Endothelial cell of umbilical vein (primary cell): ENCODE measurements at regions of chr11 and their contacts with region 1.

Region 1: GRCh38 chr11:93895106-93895862 is 44.9 kb upstream of the VSTM5 start:
- DNase-seq: peak; percentile 40
- H3K4me3 ChIP-seq: no peak overlapping the region
- H3K27ac ChIP-seq: no peak overlapping the region
- H3K4me1 ChIP-seq: no peaks in the 10 kb centered on the region
- H3K27me3 ChIP-seq: no peaks in the 10 kb centered on the region
- CTCF ChIP-seq: peak; percentile 20 to 32
- POLR2A ChIP-seq: no peak

Region 2: GRCh38 chr11:93591247-93591898 is 303.9 kb before region 1 on chr11:
- CTCF ChIA-PET with region 1: no interaction called
- POLR2A ChIA-PET with region 1: no interaction called
- dilution Hi-C with region 1: no loop called
- intact Hi-C with region 1: no loop called
- DNase-seq: no peak
- H3K4me3 ChIP-seq: no peak overlapping the region
- H3K27ac ChIP-seq: no peak overlapping the region
- H3K4me1 ChIP-seq: no peaks in the 10 kb centered on the region
- H3K27me3 ChIP-seq: no peaks in the 10 kb centered on the region
- CTCF ChIP-seq: no peak
- POLR2A ChIP-seq: no peak

Region 3: DNA sequence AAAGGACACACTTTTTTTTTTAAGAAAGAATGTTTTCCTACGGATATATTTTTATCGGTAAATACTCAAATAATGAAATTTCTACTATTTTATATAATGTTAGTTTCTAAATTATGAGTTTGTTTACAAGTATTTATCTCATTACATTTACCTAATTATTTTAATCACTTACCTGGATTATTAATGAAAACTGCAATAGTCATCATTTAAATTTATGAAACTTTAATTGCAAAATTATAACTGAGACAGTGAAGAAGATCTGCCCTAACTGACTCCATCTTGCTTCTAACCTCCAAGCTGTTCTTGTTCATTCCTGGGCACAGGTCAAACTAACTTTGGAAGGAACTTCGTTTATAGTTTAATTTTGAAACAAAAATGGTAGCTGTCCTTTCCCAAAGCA is 19.6 kb before region 1 on chr11:
- CTCF ChIA-PET with region 1: interaction called, 12 read pairs
- POLR2A ChIA-PET with region 1: no interaction called
- dilution Hi-C with region 1: no loop called
- intact Hi-C with region 1: no loop called
- DNase-seq: no peak
- H3K4me3 ChIP-seq: no peak overlapping the region
- H3K27ac ChIP-seq: no peak overlapping the region
- H3K4me1 ChIP-seq: no peaks in the 10 kb centered on the region
- H3K27me3 ChIP-seq: no peaks in the 10 kb centered on the region
- CTCF ChIP-seq: no peak
- POLR2A ChIP-seq: no peak

Region 4: GRCh38 chr11:93921695-93922468 is 26.6 kb after region 1 on chr11:
- CTCF ChIA-PET with region 1: interaction called, 12 read pairs
- POLR2A ChIA-PET with region 1: no interaction called
- dilution Hi-C with region 1: no loop called
- intact Hi-C with region 1: no loop called
- DNase-seq: peak; percentile 59
- H3K4me3 ChIP-seq: no peak overlapping the region
- H3K27ac ChIP-seq: no peak overlapping the region
- H3K4me1 ChIP-seq: no peaks in the 10 kb centered on the region
- H3K27me3 ChIP-seq: peaks cover 0 to 2% of the 10 kb centered on the region in 2 experiments
- CTCF ChIP-seq: peak; percentile 57 to 82
- POLR2A ChIP-seq: no peak

Region 5: GRCh38 chr11:94493281-94494125 is 598.2 kb after region 1 on chr11 and contains the starts of genes ANKRD49 and MRE11:
- CTCF ChIA-PET with region 1: interaction called, 14 read pairs
- POLR2A ChIA-PET with region 1: no interaction called
- dilution Hi-C with region 1: no loop called
- intact Hi-C with region 1: no loop called
- DNase-seq: peak; percentile 100
- H3K4me3 ChIP-seq: peak within 1 kb of the TSS; percentile 68 to 91 (median 85)
- H3K27ac ChIP-seq: peak within 1 kb of the TSS; percentile 56
- H3K4me1 ChIP-seq: peaks cover 16% of the 10 kb centered on the region
- H3K27me3 ChIP-seq: no peaks in the 10 kb centered on the region
- CTCF ChIP-seq: no peak
- POLR2A ChIP-seq: peak; percentile 62
- total RNA-seq, gene ANKRD49: 7.6 and 8.0 TPM in 2 replicates
- total RNA-seq, gene MRE11: 22.0 and 25.3 TPM in 2 replicates

Region 6: DNA sequence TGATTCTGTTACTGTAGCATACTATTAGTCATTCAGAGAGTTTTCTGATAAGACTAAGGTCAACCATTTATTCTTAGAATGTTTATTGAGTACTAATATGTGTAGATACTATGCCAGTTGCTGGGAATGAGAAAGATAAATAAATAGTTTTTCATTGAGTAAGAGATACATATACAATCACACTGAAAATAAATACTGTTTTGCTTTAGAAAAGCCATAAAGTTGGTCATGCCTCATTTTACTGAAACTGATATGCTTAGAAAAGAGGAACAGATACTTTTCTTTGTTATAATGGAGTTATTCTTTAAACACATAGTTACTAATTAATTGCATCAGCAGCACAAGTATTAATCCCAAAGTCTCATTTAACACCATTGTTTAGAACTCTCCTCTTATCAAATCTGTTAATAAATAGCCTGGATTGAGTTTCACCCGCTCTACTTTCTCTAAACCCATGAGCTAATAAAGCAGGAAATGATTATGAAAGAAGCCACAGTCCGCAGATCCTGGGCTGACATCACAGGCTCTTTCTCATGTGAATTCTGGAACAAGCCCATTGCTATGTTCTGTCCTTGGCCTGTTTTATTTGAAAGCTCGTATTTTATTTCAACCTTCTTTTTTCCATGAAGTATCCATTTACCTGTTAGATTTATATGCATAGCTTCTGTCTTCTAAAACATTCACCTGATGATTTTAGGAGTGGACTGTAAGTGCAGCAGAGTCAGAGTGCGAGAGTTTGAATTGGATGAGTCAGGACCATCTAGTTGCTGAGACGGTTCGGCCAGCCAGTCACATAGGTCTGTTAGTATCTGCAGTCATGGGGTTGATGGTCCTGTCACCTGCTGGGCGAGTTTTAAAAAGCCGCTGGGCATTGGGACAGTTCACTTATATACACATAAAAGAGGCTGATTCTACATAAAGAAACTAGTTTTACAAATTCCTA is 707.4 kb after region 1 on chr11:
- CTCF ChIA-PET with region 1: interaction called, 33 read pairs
- POLR2A ChIA-PET with region 1: no interaction called
- dilution Hi-C with region 1: no loop called
- intact Hi-C with region 1: loop called (anchors 1 kb)
- DNase-seq: peak; percentile 66
- H3K4me3 ChIP-seq: no peak overlapping the region
- H3K27ac ChIP-seq: no peak overlapping the region
- H3K4me1 ChIP-seq: no peaks in the 10 kb centered on the region
- H3K27me3 ChIP-seq: no peaks in the 10 kb centered on the region
- CTCF ChIP-seq: peak; percentile 31 to 40
- POLR2A ChIP-seq: no peak